CD4-positive, alpha-beta T cell (primary cell): ENCODE measurements at regions of chr18 and their contacts with region 1.

Region 1: GRCh38 chr18:25921677-25922421 is 168.6 kb downstream of the SS18 start:
- DNase-seq: peak; percentile 2 to 62 (median 11)
- ATAC-seq: no peak
- H3K4me3 ChIP-seq: no peak overlapping the region
- H3K4me3 Mint-ChIP-seq: no peak overlapping the region
- H3K27ac ChIP-seq: no peak overlapping the region
- H3K27ac Mint-ChIP-seq: no peak overlapping the region
- H3K4me1 ChIP-seq: no peaks in the 10 kb centered on the region
- H3K4me1 Mint-ChIP-seq: no peaks in the 10 kb centered on the region
- H3K27me3 ChIP-seq: no peaks in the 10 kb centered on the region
- H3K27me3 Mint-ChIP-seq: no peaks in the 10 kb centered on the region
- CTCF ChIP-seq: peak; percentile 44

Region 2: GRCh38 chr18:25946540-25946939 is 24.7 kb after region 1 on chr18:
- CTCF ChIA-PET with region 1: no interaction called
- POLR2A ChIA-PET with region 1: no interaction called
- intact Hi-C with region 1: no loop called
- DNase-seq: no peak
- ATAC-seq: no peak
- H3K4me3 ChIP-seq: no peak overlapping the region
- H3K4me3 Mint-ChIP-seq: no peak overlapping the region
- H3K27ac ChIP-seq: no peak overlapping the region
- H3K27ac Mint-ChIP-seq: no peak overlapping the region
- H3K4me1 ChIP-seq: no peaks in the 10 kb centered on the region
- H3K4me1 Mint-ChIP-seq: peaks cover 4% of the 10 kb centered on the region
- H3K27me3 ChIP-seq: no peaks in the 10 kb centered on the region
- H3K27me3 Mint-ChIP-seq: peaks cover 9% of the 10 kb centered on the region
- CTCF ChIP-seq: no peak

Region 3: GRCh38 chr18:26121476-26121875 is 199.6 kb after region 1 on chr18:
- CTCF ChIA-PET with region 1: no interaction called
- POLR2A ChIA-PET with region 1: no interaction called
- intact Hi-C with region 1: loop called in 1 of 2 experiments (anchors 10 kb)
- DNase-seq: no peak
- ATAC-seq: no peak
- H3K4me3 ChIP-seq: no peak overlapping the region
- H3K4me3 Mint-ChIP-seq: no peak overlapping the region
- H3K27ac ChIP-seq: no peak overlapping the region
- H3K27ac Mint-ChIP-seq: no peak overlapping the region
- H3K4me1 ChIP-seq: no peaks in the 10 kb centered on the region
- H3K4me1 Mint-ChIP-seq: peaks cover 8% of the 10 kb centered on the region
- H3K27me3 ChIP-seq: no peaks in the 10 kb centered on the region
- H3K27me3 Mint-ChIP-seq: peaks cover 4% of the 10 kb centered on the region
- CTCF ChIP-seq: no peak

Region 4: GRCh38 chr18:26159353-26159752 is 237.5 kb after region 1 on chr18:
- CTCF ChIA-PET with region 1: no interaction called
- POLR2A ChIA-PET with region 1: no interaction called
- intact Hi-C with region 1: loop called (anchors 2 kb)
- DNase-seq: peak in 3 of 14 experiments; percentile 18 to 29 (median 28)
- ATAC-seq: peak; percentile 51
- H3K4me3 ChIP-seq: no peak overlapping the region
- H3K4me3 Mint-ChIP-seq: no peak overlapping the region
- H3K27ac ChIP-seq: no peak overlapping the region
- H3K27ac Mint-ChIP-seq: no peak overlapping the region
- H3K4me1 ChIP-seq: no peaks in the 10 kb centered on the region
- H3K4me1 Mint-ChIP-seq: no peaks in the 10 kb centered on the region
- H3K27me3 ChIP-seq: no peaks in the 10 kb centered on the region
- H3K27me3 Mint-ChIP-seq: no peaks in the 10 kb centered on the region
- CTCF ChIP-seq: peak; percentile 45

Region 5: GRCh38 chr18:26335571-26336487 is 414.0 kb after region 1 on chr18:
- CTCF ChIA-PET with region 1: no interaction called
- POLR2A ChIA-PET with region 1: no interaction called
- intact Hi-C with region 1: loop called (anchors 1 to 5 kb)
- DNase-seq: no peak
- ATAC-seq: no peak
- H3K4me3 ChIP-seq: no peak overlapping the region
- H3K4me3 Mint-ChIP-seq: no peak overlapping the region
- H3K27ac ChIP-seq: no peak overlapping the region
- H3K27ac Mint-ChIP-seq: no peak overlapping the region
- H3K4me1 ChIP-seq: no peaks in the 10 kb centered on the region
- H3K4me1 Mint-ChIP-seq: peaks cover 10% of the 10 kb centered on the region
- H3K27me3 ChIP-seq: no peaks in the 10 kb centered on the region
- H3K27me3 Mint-ChIP-seq: no peaks in the 10 kb centered on the region
- CTCF ChIP-seq: no peak

Region 6: DNA sequence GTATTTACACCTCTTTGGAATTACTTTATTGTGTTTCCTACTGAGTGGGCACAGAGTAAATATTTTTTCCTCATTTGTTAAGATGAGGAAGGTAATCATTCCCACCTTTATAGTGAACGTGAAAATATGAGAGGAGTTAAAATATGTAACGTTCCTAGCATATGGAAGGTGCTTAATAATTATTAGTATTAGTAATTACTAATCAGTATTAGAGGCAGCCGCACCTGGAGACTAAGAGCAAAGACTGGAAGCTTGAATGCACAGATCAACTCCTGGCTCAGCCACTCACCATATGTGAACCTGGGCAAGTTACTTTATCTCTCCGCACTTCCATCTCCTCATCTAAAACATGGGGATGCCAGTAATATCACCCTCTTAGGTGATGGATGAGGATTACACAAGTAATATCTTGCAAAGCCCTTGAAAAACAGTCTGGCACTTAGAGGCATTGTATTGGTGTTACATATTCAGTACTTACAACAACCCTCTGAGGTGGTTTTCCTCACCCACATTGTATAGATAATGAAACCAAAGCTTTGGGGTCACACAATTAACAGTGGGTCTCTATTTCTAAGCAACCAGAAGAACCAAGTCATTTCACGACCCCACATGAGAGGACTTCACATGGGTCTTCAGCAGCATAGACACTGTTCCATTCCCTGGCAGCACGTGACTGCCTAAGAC is 726.8 kb after region 1 on chr18:
- CTCF ChIA-PET with region 1: no interaction called
- POLR2A ChIA-PET with region 1: no interaction called
- intact Hi-C with region 1: loop called in 1 of 2 experiments (anchors 5 kb)
- DNase-seq: no peak
- ATAC-seq: no peak
- H3K4me3 ChIP-seq: no peak overlapping the region
- H3K4me3 Mint-ChIP-seq: no peak overlapping the region
- H3K27ac ChIP-seq: no peak overlapping the region
- H3K27ac Mint-ChIP-seq: no peak overlapping the region
- H3K4me1 ChIP-seq: no peaks in the 10 kb centered on the region
- H3K4me1 Mint-ChIP-seq: no peaks in the 10 kb centered on the region
- H3K27me3 ChIP-seq: peaks cover 5 to 10% of the 10 kb centered on the region in 2 experiments
- H3K27me3 Mint-ChIP-seq: peaks cover 45% of the 10 kb centered on the region
- CTCF ChIP-seq: no peak